ENCODE measurements at regions of chr2 and their contacts with region 1.

Region 1: GRCh38 chr2:95076784-95077529 is 44.7 kb downstream of the MRPS5 start:
- DNase-seq: peak; percentile 95
- ATAC-seq: peak; percentile 77
- H3K4me3 Mint-ChIP-seq: peak overlapping the region; percentile 84
- H3K27ac Mint-ChIP-seq: peak overlapping the region; percentile 95
- H3K4me1 Mint-ChIP-seq: peaks cover 76% of the 10 kb centered on the region
- H3K27me3 Mint-ChIP-seq: no peaks in the 10 kb centered on the region

Region 2: GRCh38 chr2:95012881-95013550 is 63.9 kb before region 1 on chr2:
- CTCF ChIA-PET with region 1: interaction called, 21 read pairs
- POLR2A ChIA-PET with region 1: no interaction called
- DNase-seq: no peak
- ATAC-seq: no peak
- H3K4me3 Mint-ChIP-seq: no peak overlapping the region
- H3K27ac Mint-ChIP-seq: no peak overlapping the region
- H3K4me1 Mint-ChIP-seq: peaks cover 32% of the 10 kb centered on the region
- H3K27me3 Mint-ChIP-seq: no peaks in the 10 kb centered on the region

Region 3: GRCh38 chr2:95030496-95030895 is 46.5 kb before region 1 on chr2:
- CTCF ChIA-PET with region 1: interaction called, 693 read pairs
- POLR2A ChIA-PET with region 1: interaction called, 255 read pairs
- DNase-seq: no peak
- ATAC-seq: no peak
- H3K4me3 Mint-ChIP-seq: no peak overlapping the region
- H3K27ac Mint-ChIP-seq: peak overlapping the region; percentile 49
- H3K4me1 Mint-ChIP-seq: peaks cover 51% of the 10 kb centered on the region
- H3K27me3 Mint-ChIP-seq: no peaks in the 10 kb centered on the region

Region 4: DNA sequence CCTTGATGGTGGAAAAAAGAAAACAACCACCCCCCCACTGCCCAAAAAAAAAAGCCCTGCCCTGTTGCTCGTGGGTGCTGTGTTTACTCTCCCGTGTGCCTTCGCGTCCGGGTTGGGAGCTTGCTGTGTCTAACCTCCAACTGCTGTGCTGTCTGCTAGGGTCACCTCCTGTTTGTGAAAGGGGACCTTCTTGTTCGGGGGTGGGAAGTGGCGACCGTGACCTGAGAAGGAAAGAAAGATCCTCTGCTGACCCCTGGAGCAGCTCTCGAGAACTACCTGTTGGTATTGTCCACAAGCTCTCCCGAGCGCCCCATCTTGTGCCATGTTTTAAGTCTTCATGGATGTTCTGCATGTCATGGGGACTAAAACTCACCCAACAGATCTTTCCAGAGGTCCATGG is 23.4 kb before region 1 on chr2:
- CTCF ChIA-PET with region 1: interaction called, 126 read pairs
- POLR2A ChIA-PET with region 1: interaction called, 45 read pairs
- DNase-seq: no peak
- ATAC-seq: no peak
- H3K4me3 Mint-ChIP-seq: no peak overlapping the region
- H3K27ac Mint-ChIP-seq: peak overlapping the region; percentile 61
- H3K4me1 Mint-ChIP-seq: peaks cover 78% of the 10 kb centered on the region
- H3K27me3 Mint-ChIP-seq: no peaks in the 10 kb centered on the region

Region 5: DNA sequence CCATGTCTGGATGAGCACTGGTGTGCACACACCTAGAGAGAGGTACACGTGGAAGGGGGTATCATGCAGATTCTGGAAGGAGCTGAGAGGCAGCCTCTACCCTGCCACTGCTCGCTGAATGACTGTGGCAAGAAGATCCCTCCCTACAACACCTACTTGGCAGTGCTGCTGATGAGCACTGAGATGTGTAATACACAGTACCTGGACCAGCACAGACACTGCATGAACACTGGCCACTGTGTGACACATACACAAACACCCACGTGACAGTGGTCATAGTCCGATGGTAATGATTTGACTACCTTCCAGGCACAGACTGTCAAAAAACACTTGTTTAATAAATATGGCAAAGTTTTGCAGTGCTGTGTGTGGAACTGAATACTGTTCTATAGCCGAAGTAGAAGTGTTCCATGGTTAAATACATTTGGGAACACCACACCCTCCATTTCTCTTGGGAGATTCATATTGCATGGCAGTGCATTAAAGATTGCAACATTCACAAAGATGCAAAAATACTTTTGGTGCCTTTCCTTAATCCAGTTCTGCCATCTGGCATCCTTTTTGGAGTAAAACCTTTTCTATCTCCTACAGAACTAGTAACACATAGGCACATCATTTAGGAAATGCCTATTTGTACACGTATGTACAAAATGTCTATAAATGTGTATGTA is 15.1 kb after region 1 on chr2:
- CTCF ChIA-PET with region 1: interaction called, 13 read pairs
- POLR2A ChIA-PET with region 1: no interaction called
- DNase-seq: no peak
- ATAC-seq: no peak
- H3K4me3 Mint-ChIP-seq: no peak overlapping the region
- H3K27ac Mint-ChIP-seq: no peak overlapping the region
- H3K4me1 Mint-ChIP-seq: peaks cover 17% of the 10 kb centered on the region
- H3K27me3 Mint-ChIP-seq: no peaks in the 10 kb centered on the region

Region 6: GRCh38 chr2:95115418-95115817 is 38.5 kb after region 1 on chr2:
- CTCF ChIA-PET with region 1: interaction called, 178 read pairs
- POLR2A ChIA-PET with region 1: interaction called, 15 read pairs
- DNase-seq: peak; percentile 86
- ATAC-seq: peak; percentile 100
- H3K4me3 Mint-ChIP-seq: no peak overlapping the region
- H3K27ac Mint-ChIP-seq: peak overlapping the region; percentile 27
- H3K4me1 Mint-ChIP-seq: peaks cover 44% of the 10 kb centered on the region
- H3K27me3 Mint-ChIP-seq: no peaks in the 10 kb centered on the region

Region 7: DNA sequence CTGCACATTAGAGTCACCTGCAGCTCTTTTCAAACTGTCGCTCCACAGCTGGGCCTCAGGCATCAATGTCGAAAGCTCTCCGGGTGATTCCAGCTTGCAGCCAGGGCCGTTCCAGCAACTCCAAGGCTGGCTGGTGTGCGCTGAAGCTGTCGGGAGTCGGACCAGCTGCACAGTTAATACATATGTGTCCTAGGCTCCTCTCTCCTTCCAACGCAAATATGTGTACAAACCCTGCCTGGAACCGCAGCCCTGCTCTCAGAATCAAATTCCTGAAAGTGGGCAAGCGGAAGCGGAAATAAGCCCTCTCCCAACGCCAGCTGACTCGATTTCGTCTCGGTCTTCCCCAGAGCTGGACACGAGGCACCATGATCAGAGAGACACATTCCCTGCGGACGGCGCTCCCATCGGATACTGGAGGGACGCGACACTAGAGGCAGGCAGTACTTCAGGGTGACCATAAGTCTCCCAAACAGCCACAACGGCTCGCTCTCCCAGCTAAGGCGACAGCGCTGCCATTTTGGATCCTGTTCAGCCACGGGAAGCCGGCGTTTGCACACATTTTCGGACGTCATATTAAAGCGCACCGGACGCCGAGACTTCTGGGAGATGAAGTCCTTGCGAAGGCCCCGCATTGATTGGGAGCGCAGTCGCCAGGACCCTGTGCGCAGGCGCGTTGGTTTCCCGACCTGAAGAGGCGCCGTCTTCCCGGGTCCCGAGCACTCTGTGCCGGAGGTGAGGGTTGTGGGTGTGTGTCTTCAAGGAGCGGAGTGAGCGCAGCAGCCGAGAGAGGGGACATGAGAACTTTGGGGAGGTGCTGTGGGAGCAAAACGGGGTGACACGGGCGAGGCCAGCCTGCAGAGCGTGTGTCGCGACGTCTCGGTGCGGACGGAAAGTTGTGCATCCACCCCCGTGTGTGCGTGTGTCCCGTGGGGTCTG is 88.4 kb after region 1 on chr2 and contains the start of gene ZNF2:
- CTCF ChIA-PET with region 1: interaction called, 10 read pairs
- POLR2A ChIA-PET with region 1: no interaction called
- DNase-seq: peak; percentile 98
- ATAC-seq: peak; percentile 98
- H3K4me3 Mint-ChIP-seq: peak within 1 kb of the TSS; percentile 93
- H3K27ac Mint-ChIP-seq: peak within 1 kb of the TSS; percentile 96
- H3K4me1 Mint-ChIP-seq: peaks cover 28% of the 10 kb centered on the region
- H3K27me3 Mint-ChIP-seq: no peaks in the 10 kb centered on the region
- total RNA-seq, gene ZNF2: 4.5 to 5.0 TPM

Measured in activated CD8-positive, alpha-beta T cell treated with anti-CD3 and anti-CD28 coated beads, Interleukin-2, amount 10 ng/mL, durations not matched to agents 7 days and 5 days (primary cell).